Left ventricle myocardium superior (tissue), 1 donor: ENCODE measurements at regions of chr9 and their contacts with region 1.

Region 1: GRCh38 chr9:96686548-96687335 is 31.6 kb upstream of the PRXL2C start:
- DNase-seq: peak; percentile 90
- ATAC-seq: peak; percentile 99

Region 2: GRCh38 chr9:95317119-95317892 is 1369.4 kb before region 1 on chr9 and contains the start of gene FANCC:
- intact Hi-C with region 1: loop called (anchors 10 kb)
- DNase-seq: peak; percentile 98
- ATAC-seq: peak; percentile 96
- total RNA-seq, gene FANCC: 5.9 TPM

Region 3: DNA sequence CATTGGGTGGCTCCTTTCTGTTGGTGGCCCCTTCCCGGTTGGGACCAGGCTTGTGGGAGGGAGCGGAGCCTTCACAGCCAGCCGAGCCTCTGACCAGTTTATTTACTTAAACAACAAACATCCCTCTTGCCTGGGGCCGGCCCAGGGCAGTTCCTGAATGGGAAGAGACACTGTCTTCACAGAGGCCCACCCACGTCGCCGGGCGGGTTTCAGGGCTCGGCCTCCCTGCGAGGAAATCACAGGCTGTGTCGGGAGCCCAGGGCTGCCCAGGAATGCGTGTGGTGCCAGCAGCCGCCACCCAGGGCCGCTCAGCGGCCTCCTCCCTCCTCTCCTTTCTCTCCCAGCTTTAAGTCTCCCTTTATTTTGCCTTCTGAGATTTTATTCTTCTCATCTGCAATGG is 517.3 kb before region 1 on chr9:
- intact Hi-C with region 1: no loop called
- DNase-seq: peak; percentile 39
- ATAC-seq: no peak

Region 4: GRCh38 chr9:96638606-96639364 is 48.0 kb before region 1 on chr9:
- intact Hi-C with region 1: no loop called
- DNase-seq: no peak
- ATAC-seq: no peak

Region 5: GRCh38 chr9:96725576-96725975 is 38.8 kb after region 1 on chr9:
- intact Hi-C with region 1: no loop called
- DNase-seq: no peak
- ATAC-seq: no peak

Region 6: GRCh38 chr9:97038909-97039781 is 352.4 kb after region 1 on chr9 and contains the start of gene CTSV:
- intact Hi-C with region 1: no loop called
- DNase-seq: peak; percentile 91
- ATAC-seq: peak; percentile 100
- total RNA-seq, gene CTSV: 0.27 TPM